ENCODE measurements at regions of chrX and their contacts with region 1.

Region 1: GRCh38 chrX:87338510-87338909 is 179.1 kb upstream of the KLHL4 start:
- DNase-seq: no peak

Region 2: GRCh38 chrX:87616371-87616770 is 277.9 kb after region 1 on chrX:
- intact Hi-C with region 1: no loop called
- DNase-seq: no peak

Region 3: GRCh38 chrX:87664381-87664780 is 325.9 kb after region 1 on chrX:
- intact Hi-C with region 1: loop called (anchors 5 kb)
- DNase-seq: no peak